CD8-positive, alpha-beta memory T cell (primary cell): ENCODE measurements at regions of chr1 and their contacts with region 1.

Region 1: GRCh38 chr1:6359216-6360116 is 34.1 kb downstream of the ACOT7 start:
- DNase-seq: peak; percentile 23 to 73 (median 45)
- H3K4me3 ChIP-seq: peak overlapping the region; percentile 41
- H3K4me3 Mint-ChIP-seq: peak overlapping the region; percentile 55 to 92 (median 75)
- H3K27ac ChIP-seq: peak overlapping the region; percentile 69
- H3K27ac Mint-ChIP-seq: peak overlapping the region; percentile 88 to 97 (median 92)
- H3K4me1 ChIP-seq: peaks cover 41% of the 10 kb centered on the region
- H3K4me1 Mint-ChIP-seq: peaks cover 32 to 55% (median 38%) of the 10 kb centered on the region in 3 donors
- H3K27me3 ChIP-seq: no peaks in the 10 kb centered on the region
- H3K27me3 Mint-ChIP-seq: no peaks in the 10 kb centered on the region

Region 2: GRCh38 chr1:6185635-6186382 is 173.7 kb before region 1 on chr1:
- CTCF ChIA-PET with region 1: no interaction called
- POLR2A ChIA-PET with region 1: no interaction called
- DNase-seq: no peak
- H3K4me3 ChIP-seq: no peak overlapping the region
- H3K4me3 Mint-ChIP-seq: no peak overlapping the region
- H3K27ac ChIP-seq: no peak overlapping the region
- H3K27ac Mint-ChIP-seq: peak overlapping the region in 2 of 8 donors; percentile 21 to 42
- H3K4me1 ChIP-seq: no peaks in the 10 kb centered on the region
- H3K4me1 Mint-ChIP-seq: peaks cover 34 to 47% (median 47%) of the 10 kb centered on the region in 3 donors
- H3K27me3 ChIP-seq: no peaks in the 10 kb centered on the region
- H3K27me3 Mint-ChIP-seq: peaks cover 8 to 10% of the 10 kb centered on the region in 2 donors

Region 3: DNA sequence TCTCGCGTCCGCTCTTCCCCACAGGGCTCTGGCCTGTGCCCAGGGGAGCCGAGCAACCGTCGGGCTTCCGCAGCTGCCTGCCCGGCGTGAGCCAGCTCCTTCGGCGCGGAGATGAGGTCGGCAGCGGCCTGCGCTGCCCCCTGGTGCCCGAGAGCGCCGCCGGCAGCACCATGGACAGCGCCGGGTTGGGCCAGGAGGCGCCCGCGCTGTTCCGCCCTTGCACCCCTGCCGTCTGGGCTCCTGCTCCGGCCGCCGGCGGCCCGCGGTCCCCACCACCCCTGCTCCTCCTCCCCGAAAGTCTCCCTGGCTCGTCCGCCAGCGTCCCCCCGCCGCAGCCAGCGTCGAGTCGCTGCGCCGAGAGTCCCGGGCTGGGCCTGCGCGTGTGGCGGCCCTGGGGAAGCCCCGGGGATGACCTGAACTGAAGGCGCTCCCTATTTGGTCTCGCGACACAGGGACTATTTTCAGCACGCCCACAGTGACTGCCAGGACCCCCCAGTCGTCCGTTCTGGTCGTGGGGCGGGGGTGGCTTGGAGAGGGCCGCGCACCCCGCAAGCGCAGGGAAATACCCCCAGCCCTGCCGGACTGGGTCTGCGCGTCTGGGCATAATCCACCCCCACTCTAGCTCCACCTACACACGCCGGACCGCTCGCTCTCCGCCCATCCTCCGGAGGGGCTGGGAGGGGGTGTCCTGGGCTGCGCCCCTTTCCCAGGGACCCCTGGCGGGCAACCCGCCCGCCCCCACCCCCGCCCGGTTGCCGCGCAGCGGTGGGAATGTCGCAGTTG is 114.2 kb before region 1 on chr1:
- CTCF ChIA-PET with region 1: interaction called, 14 read pairs
- POLR2A ChIA-PET with region 1: no interaction called
- DNase-seq: peak; percentile 70 to 85 (median 72)
- H3K4me3 ChIP-seq: peak overlapping the region; percentile 19
- H3K4me3 Mint-ChIP-seq: no peak overlapping the region
- H3K27ac ChIP-seq: no peak overlapping the region
- H3K27ac Mint-ChIP-seq: no peak overlapping the region
- H3K4me1 ChIP-seq: peaks cover 20% of the 10 kb centered on the region
- H3K4me1 Mint-ChIP-seq: peaks cover 8 to 29% (median 11%) of the 10 kb centered on the region in 3 donors
- H3K27me3 ChIP-seq: peaks cover 62% of the 10 kb centered on the region
- H3K27me3 Mint-ChIP-seq: peaks cover 49 to 61% of the 10 kb centered on the region in 2 donors

Region 4: GRCh38 chr1:6317098-6317760 is 42.2 kb before region 1 on chr1:
- CTCF ChIA-PET with region 1: no interaction called
- POLR2A ChIA-PET with region 1: no interaction called
- DNase-seq: no peak
- H3K4me3 ChIP-seq: no peak overlapping the region
- H3K4me3 Mint-ChIP-seq: no peak overlapping the region
- H3K27ac ChIP-seq: peak overlapping the region; percentile 61
- H3K27ac Mint-ChIP-seq: no peak overlapping the region
- H3K4me1 ChIP-seq: no peaks in the 10 kb centered on the region
- H3K4me1 Mint-ChIP-seq: no peaks in the 10 kb centered on the region
- H3K27me3 ChIP-seq: no peaks in the 10 kb centered on the region
- H3K27me3 Mint-ChIP-seq: no peaks in the 10 kb centered on the region

Region 5: DNA sequence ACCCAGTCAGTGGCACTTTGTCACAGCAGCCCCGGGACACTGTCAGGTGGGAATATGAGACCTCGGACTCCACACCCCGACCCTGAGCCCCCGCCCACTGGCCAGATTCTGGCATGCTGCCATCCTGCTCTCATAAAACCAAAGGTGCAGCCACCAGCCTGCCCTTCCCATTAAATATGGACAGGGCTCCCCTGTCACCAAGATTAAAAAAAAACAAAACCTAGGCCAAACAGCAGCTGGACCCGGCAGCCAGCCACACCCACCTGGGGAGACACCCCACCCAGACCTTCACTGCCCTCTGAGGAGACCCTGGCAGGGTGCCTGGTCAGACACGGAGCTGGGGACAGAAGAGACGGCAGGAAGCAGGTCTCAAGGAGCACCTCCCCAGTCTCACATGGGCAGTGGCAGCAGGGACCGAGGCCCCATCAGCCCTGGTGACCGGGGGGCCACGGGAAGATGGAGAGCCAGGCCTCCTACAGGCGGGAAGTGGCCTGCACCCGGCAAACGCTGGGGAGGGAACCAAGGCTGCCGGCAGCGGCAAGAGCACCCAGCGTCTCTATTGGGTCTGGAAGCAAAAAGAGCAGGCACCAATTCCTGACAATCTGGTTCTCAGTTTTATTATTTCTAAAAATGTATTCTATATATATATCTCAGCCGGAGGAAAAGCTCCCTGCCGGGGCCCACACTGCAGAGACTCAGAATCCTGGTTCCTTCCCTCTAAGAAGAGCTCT is 27.8 kb before region 1 on chr1:
- CTCF ChIA-PET with region 1: no interaction called
- POLR2A ChIA-PET with region 1: no interaction called
- DNase-seq: no peak
- H3K4me3 ChIP-seq: no peak overlapping the region
- H3K4me3 Mint-ChIP-seq: no peak overlapping the region
- H3K27ac ChIP-seq: no peak overlapping the region
- H3K27ac Mint-ChIP-seq: no peak overlapping the region
- H3K4me1 ChIP-seq: no peaks in the 10 kb centered on the region
- H3K4me1 Mint-ChIP-seq: no peaks in the 10 kb centered on the region
- H3K27me3 ChIP-seq: no peaks in the 10 kb centered on the region
- H3K27me3 Mint-ChIP-seq: peaks cover 0 to 1% of the 10 kb centered on the region in 2 donors

Region 6: GRCh38 chr1:6401673-6402072 is 42.2 kb after region 1 on chr1:
- CTCF ChIA-PET with region 1: interaction called, 13 read pairs
- POLR2A ChIA-PET with region 1: no interaction called
- DNase-seq: no peak
- H3K4me3 ChIP-seq: no peak overlapping the region
- H3K4me3 Mint-ChIP-seq: no peak overlapping the region
- H3K27ac ChIP-seq: no peak overlapping the region
- H3K27ac Mint-ChIP-seq: no peak overlapping the region
- H3K4me1 ChIP-seq: no peaks in the 10 kb centered on the region
- H3K4me1 Mint-ChIP-seq: peaks cover 0 to 4% (median 3%) of the 10 kb centered on the region in 3 donors
- H3K27me3 ChIP-seq: no peaks in the 10 kb centered on the region
- H3K27me3 Mint-ChIP-seq: peaks cover 11% of the 10 kb centered on the region in 2 donors

Region 7: GRCh38 chr1:6475381-6476133 is 116.1 kb after region 1 on chr1:
- CTCF ChIA-PET with region 1: no interaction called
- POLR2A ChIA-PET with region 1: interaction called, 11 read pairs
- DNase-seq: peak; percentile 67 to 86 (median 73)
- H3K4me3 ChIP-seq: no peak overlapping the region
- H3K4me3 Mint-ChIP-seq: no peak overlapping the region
- H3K27ac ChIP-seq: no peak overlapping the region
- H3K27ac Mint-ChIP-seq: peak overlapping the region in 1 of 8 donors; percentile 93
- H3K4me1 ChIP-seq: peaks cover 8% of the 10 kb centered on the region
- H3K4me1 Mint-ChIP-seq: peaks cover 0 to 7% (median 0%) of the 10 kb centered on the region in 3 donors
- H3K27me3 ChIP-seq: no peaks in the 10 kb centered on the region
- H3K27me3 Mint-ChIP-seq: peaks cover 0 to 3% of the 10 kb centered on the region in 2 donors